B cell (primary cell): ENCODE measurements at regions of chr17 and their contacts with region 1.

Region 1: GRCh38 chr17:4565209-4566141 is 5.1 kb upstream of the GGT6 start:
- DNase-seq: peak; percentile 71
- ATAC-seq: peak; percentile 74
- H3K4me3 ChIP-seq: no peak overlapping the region
- H3K4me3 Mint-ChIP-seq: peak overlapping the region; percentile 73
- H3K27ac ChIP-seq: no peak overlapping the region
- H3K27ac Mint-ChIP-seq: no peak overlapping the region
- H3K4me1 ChIP-seq: peaks cover 14 to 19% of the 10 kb centered on the region in 2 donors
- H3K4me1 Mint-ChIP-seq: peaks cover 25% of the 10 kb centered on the region
- H3K27me3 ChIP-seq: no peaks in the 10 kb centered on the region
- H3K27me3 Mint-ChIP-seq: no peaks in the 10 kb centered on the region
- CTCF ChIP-seq: peak; percentile 92

Region 2: DNA sequence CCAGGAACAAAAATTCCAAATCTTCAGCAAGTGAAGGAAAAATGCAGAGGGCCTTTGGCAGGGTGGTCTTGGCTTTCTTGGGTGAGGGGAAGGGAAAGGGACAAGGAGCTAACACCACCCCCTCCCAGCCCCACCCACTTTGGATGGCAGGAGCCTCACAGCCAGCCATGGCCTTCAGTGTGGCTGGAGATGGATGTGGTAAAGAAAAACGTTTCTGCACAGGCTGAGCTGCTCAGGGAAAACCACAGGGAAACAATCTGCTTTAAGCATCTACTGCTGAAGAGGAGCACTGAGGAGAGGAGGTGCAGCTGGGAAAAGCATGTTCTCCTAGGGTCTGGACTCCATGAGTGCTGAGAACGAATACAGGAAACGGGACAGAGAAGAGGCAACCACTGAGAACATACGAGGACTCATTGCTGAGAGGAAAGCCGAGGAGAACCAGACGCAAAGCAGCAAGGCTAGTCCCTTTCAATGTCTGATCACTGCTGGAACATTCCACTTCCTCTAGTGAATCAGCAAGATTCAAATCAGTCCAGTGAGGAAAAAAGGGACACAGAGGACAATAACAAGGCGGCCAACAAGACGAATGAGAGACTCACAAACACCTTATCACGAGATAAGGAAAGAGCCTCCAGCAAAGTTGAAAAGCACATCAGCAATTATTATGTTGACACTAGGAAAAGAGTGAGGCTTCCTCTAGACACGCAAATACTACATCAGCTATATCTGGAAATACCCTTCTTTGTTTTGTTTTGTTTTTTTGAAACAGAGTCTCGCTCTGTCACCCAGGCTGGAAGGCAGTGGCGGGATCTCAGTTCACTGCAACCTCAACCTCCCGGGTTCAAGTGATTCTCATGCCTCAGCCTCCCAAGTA is 464.4 kb before region 1 on chr17:
- CTCF ChIA-PET with region 1: no interaction called
- POLR2A ChIA-PET with region 1: no interaction called
- intact Hi-C with region 1: no loop called
- DNase-seq: peak; percentile 35
- ATAC-seq: peak; percentile 54
- H3K4me3 ChIP-seq: no peak overlapping the region
- H3K4me3 Mint-ChIP-seq: peak overlapping the region; percentile 33
- H3K27ac ChIP-seq: peak overlapping the region; percentile 3 to 79
- H3K27ac Mint-ChIP-seq: peak overlapping the region; percentile 84
- H3K4me1 ChIP-seq: peaks cover 3 to 7% of the 10 kb centered on the region in 2 donors
- H3K4me1 Mint-ChIP-seq: peaks cover 19% of the 10 kb centered on the region
- H3K27me3 ChIP-seq: no peaks in the 10 kb centered on the region
- H3K27me3 Mint-ChIP-seq: no peaks in the 10 kb centered on the region
- CTCF ChIP-seq: no peak

Region 3: GRCh38 chr17:4516735-4517134 is 48.7 kb before region 1 on chr17:
- CTCF ChIA-PET with region 1: no interaction called
- POLR2A ChIA-PET with region 1: no interaction called
- intact Hi-C with region 1: no loop called
- DNase-seq: no peak
- ATAC-seq: no peak
- H3K4me3 ChIP-seq: no peak overlapping the region
- H3K4me3 Mint-ChIP-seq: no peak overlapping the region
- H3K27ac ChIP-seq: no peak overlapping the region
- H3K27ac Mint-ChIP-seq: no peak overlapping the region
- H3K4me1 ChIP-seq: peaks cover 0 to 12% of the 10 kb centered on the region in 2 donors
- H3K4me1 Mint-ChIP-seq: peaks cover 3% of the 10 kb centered on the region
- H3K27me3 ChIP-seq: no peaks in the 10 kb centered on the region
- H3K27me3 Mint-ChIP-seq: no peaks in the 10 kb centered on the region
- CTCF ChIP-seq: no peak

Region 4: DNA sequence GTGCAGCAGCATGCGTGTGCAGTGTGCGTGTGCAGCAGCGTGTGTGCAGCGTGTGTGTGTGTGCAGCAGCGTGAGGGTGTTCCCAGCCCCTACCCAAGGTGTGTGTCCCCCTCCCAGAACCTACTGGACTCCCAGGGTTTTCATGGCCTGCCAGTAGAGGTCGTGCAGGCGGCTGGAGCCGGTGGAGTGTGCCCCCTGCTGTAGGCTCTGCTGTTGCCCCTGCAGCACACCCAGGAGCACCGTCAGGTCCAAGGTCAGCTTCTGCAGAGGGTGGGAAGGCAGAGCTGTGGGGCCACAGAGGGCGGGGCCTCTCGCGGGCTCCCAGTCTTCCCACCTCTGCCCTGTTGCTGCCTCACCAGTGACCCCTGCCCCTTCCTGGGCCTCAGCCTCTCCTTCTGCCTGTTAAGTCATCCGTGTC is 25.2 kb before region 1 on chr17:
- CTCF ChIA-PET with region 1: no interaction called
- POLR2A ChIA-PET with region 1: no interaction called
- intact Hi-C with region 1: no loop called
- DNase-seq: no peak
- ATAC-seq: no peak
- H3K4me3 ChIP-seq: no peak overlapping the region
- H3K4me3 Mint-ChIP-seq: no peak overlapping the region
- H3K27ac ChIP-seq: no peak overlapping the region
- H3K27ac Mint-ChIP-seq: no peak overlapping the region
- H3K4me1 ChIP-seq: peaks cover 0 to 3% of the 10 kb centered on the region in 2 donors
- H3K4me1 Mint-ChIP-seq: peaks cover 2% of the 10 kb centered on the region
- H3K27me3 ChIP-seq: no peaks in the 10 kb centered on the region
- H3K27me3 Mint-ChIP-seq: no peaks in the 10 kb centered on the region
- CTCF ChIP-seq: no peak

Region 5: DNA sequence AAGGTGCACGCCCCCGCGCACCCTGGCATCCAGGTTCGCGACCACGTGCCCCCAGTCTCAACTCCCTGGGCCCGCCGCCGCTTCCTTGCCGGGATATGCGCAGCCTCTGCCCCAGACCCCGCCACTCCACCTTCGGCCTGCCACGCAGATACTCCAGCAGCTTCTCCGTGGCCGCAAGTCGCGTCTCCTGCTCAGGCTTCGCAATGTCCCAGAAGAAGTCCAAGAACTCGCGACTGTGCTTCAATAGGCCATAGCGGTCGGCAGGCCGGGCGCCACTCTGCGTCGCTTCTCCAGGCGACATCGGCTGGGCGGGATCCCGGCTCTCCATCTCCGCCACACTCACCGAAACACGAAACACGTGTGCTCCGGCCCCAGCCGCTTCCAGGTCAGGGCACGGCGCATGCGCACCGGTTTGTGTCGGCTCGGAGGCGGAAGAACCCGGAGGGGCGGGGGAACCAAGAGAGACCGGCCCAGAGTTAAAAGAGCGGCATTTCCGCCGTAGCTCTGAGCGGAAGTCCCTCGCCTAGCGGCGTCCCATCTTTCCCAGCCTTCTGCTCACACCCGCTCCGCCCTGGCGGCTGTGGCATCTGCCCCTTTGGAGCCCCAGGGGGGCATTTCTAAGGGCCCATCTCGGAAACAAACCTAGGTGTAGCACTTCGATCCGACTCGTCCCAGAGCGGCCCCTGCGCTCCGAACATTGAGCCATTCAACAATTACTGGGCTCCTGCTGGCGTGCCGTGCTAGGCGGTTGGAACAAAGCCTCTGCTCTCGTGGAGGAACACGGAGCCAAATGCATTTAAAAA is 10.3 kb before region 1 on chr17 and contains the start of gene MYBBP1A:
- CTCF ChIA-PET with region 1: interaction called, 48 read pairs
- POLR2A ChIA-PET with region 1: interaction called, 5 read pairs
- intact Hi-C with region 1: loop called (anchors 1 kb)
- DNase-seq: peak; percentile 96
- ATAC-seq: peak; percentile 95
- H3K4me3 ChIP-seq: peak within 1 kb of the TSS; percentile 74 to 90 (median 83)
- H3K4me3 Mint-ChIP-seq: peak within 1 kb of the TSS; percentile 94
- H3K27ac ChIP-seq: peak within 1 kb of the TSS; percentile 66 to 83
- H3K27ac Mint-ChIP-seq: peak within 1 kb of the TSS; percentile 96
- H3K4me1 ChIP-seq: peaks cover 19 to 21% of the 10 kb centered on the region in 2 donors
- H3K4me1 Mint-ChIP-seq: peaks cover 23% of the 10 kb centered on the region
- H3K27me3 ChIP-seq: no peaks in the 10 kb centered on the region
- H3K27me3 Mint-ChIP-seq: no peaks in the 10 kb centered on the region
- CTCF ChIP-seq: no peak
- total RNA-seq, gene MYBBP1A: 65.8 and 72.4 TPM in 2 replicates

Region 6: GRCh38 chr17:4576729-4577322 is 11.4 kb after region 1 on chr17:
- CTCF ChIA-PET with region 1: interaction called, 10 read pairs
- POLR2A ChIA-PET with region 1: no interaction called
- intact Hi-C with region 1: no loop called
- DNase-seq: no peak
- ATAC-seq: no peak
- H3K4me3 ChIP-seq: no peak overlapping the region
- H3K4me3 Mint-ChIP-seq: no peak overlapping the region
- H3K27ac ChIP-seq: no peak overlapping the region
- H3K27ac Mint-ChIP-seq: no peak overlapping the region
- H3K4me1 ChIP-seq: no peaks in the 10 kb centered on the region
- H3K4me1 Mint-ChIP-seq: peaks cover 6% of the 10 kb centered on the region
- H3K27me3 ChIP-seq: peaks cover 0 to 11% (median 1%) of the 10 kb centered on the region in 4 experiments
- H3K27me3 Mint-ChIP-seq: peaks cover 13% of the 10 kb centered on the region
- CTCF ChIP-seq: no peak

Region 7: DNA sequence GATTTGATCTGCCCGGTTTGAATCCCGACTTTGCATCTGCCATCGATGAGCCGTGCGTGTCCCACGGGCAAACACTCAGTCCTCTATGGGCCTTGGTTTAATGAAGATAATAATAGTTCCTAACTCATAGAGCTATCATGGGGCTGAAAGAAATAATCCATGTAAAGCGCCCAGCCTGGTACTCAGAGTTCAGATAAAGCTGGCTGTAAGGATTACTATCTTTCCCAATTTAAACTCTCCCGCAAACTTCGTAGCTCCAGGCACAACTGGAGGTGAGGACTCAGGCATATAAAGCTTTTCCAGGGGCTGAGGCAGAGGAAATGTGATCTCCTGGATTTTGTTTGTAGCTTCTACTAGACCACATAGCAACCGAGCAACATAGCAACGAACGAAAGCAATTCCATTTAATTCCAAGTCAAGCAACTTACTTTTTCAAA is 59.7 kb after region 1 on chr17:
- CTCF ChIA-PET with region 1: interaction called, 65 read pairs
- POLR2A ChIA-PET with region 1: no interaction called
- intact Hi-C with region 1: loop called (anchors 1 kb)
- DNase-seq: no peak
- ATAC-seq: no peak
- H3K4me3 ChIP-seq: no peak overlapping the region
- H3K4me3 Mint-ChIP-seq: no peak overlapping the region
- H3K27ac ChIP-seq: no peak overlapping the region
- H3K27ac Mint-ChIP-seq: no peak overlapping the region
- H3K4me1 ChIP-seq: no peaks in the 10 kb centered on the region
- H3K4me1 Mint-ChIP-seq: no peaks in the 10 kb centered on the region
- H3K27me3 ChIP-seq: peaks cover 0 to 4% (median 1%) of the 10 kb centered on the region in 4 experiments
- H3K27me3 Mint-ChIP-seq: peaks cover 4% of the 10 kb centered on the region
- CTCF ChIP-seq: no peak

Region 8: DNA sequence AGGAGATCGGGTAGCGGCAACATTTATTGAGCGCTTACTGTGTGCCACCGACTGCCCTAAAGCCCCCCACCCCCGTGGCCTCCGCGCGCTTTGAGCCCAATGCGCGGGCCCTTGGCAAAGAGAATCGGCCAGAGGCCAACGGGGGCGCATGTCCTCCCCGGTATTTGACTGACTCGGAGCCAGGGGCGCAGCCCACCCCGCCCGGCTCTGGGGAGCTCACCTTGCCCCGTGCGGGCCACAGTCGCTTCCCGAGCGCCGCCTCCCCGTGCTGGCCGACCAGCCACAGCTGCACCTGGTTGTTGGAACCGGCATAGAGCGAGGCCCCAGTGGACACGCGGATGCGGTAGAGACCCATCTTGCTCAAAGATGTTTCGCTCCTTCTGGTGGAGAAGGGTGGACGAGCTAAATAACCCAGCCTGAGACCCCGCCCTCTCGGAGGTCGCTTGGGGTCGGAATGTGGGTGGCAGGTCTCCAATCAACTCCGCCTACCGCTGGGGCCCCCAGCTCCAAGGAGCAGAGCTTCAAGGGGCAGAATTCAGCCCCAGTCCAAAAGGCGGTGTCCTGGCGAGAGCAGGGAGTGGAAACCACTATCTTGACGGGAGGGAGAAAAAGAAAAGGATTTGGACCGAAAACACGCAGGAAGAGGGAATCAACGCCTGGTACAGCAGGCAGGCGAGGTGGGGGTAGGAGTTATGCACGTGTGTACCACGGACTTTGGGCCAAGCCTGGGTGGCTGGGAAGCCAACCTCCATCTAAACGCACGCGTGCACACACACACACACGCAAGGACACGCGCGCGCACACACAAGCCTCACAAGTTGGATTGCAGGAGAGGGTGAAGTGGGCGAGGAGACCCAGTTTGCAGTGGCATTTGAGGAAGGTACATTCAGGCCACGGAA is 76.1 kb after region 1 on chr17 and contains the start of gene ALOX15:
- CTCF ChIA-PET with region 1: no interaction called
- POLR2A ChIA-PET with region 1: no interaction called
- intact Hi-C with region 1: no loop called
- DNase-seq: peak; percentile 38
- ATAC-seq: no peak
- H3K4me3 ChIP-seq: no peak within 1 kb of the TSS
- H3K4me3 Mint-ChIP-seq: no peak within 1 kb of the TSS
- H3K27ac ChIP-seq: no peak within 1 kb of the TSS
- H3K27ac Mint-ChIP-seq: peak within 1 kb of the TSS; percentile 11
- H3K4me1 ChIP-seq: peaks cover 28 to 32% of the 10 kb centered on the region in 2 donors
- H3K4me1 Mint-ChIP-seq: peaks cover 27% of the 10 kb centered on the region
- H3K27me3 ChIP-seq: peaks cover 0 to 54% (median 19%) of the 10 kb centered on the region in 4 experiments
- H3K27me3 Mint-ChIP-seq: peaks cover 50% of the 10 kb centered on the region
- CTCF ChIP-seq: no peak
- total RNA-seq, gene ALOX15: not detected in 2 replicates

Region 9: GRCh38 chr17:4789901-4790704 is 224.6 kb after region 1 on chr17:
- CTCF ChIA-PET with region 1: no interaction called
- POLR2A ChIA-PET with region 1: no interaction called
- intact Hi-C with region 1: loop called (anchors 10 kb)
- DNase-seq: peak; percentile 89
- ATAC-seq: peak; percentile 94
- H3K4me3 ChIP-seq: peak overlapping the region; percentile 27 to 70 (median 63)
- H3K4me3 Mint-ChIP-seq: peak overlapping the region; percentile 94
- H3K27ac ChIP-seq: peak overlapping the region in 1 of 2 donors; percentile 53
- H3K27ac Mint-ChIP-seq: peak overlapping the region; percentile 93
- H3K4me1 ChIP-seq: peaks cover 28 to 33% of the 10 kb centered on the region in 2 donors
- H3K4me1 Mint-ChIP-seq: peaks cover 30% of the 10 kb centered on the region
- H3K27me3 ChIP-seq: peaks cover 0 to 44% (median 27%) of the 10 kb centered on the region in 4 experiments
- H3K27me3 Mint-ChIP-seq: peaks cover 27% of the 10 kb centered on the region
- CTCF ChIP-seq: peak; percentile 81

Region 10: GRCh38 chr17:4895657-4896331 is 330.3 kb after region 1 on chr17:
- CTCF ChIA-PET with region 1: interaction called, 33 read pairs
- POLR2A ChIA-PET with region 1: no interaction called
- intact Hi-C with region 1: loop called (anchors 5 kb)
- DNase-seq: no peak
- ATAC-seq: no peak
- H3K4me3 ChIP-seq: no peak overlapping the region
- H3K4me3 Mint-ChIP-seq: no peak overlapping the region
- H3K27ac ChIP-seq: no peak overlapping the region
- H3K27ac Mint-ChIP-seq: no peak overlapping the region
- H3K4me1 ChIP-seq: peaks cover 21 to 22% of the 10 kb centered on the region in 2 donors
- H3K4me1 Mint-ChIP-seq: peaks cover 22% of the 10 kb centered on the region
- H3K27me3 ChIP-seq: peaks cover 0 to 21% (median 10%) of the 10 kb centered on the region in 4 experiments
- H3K27me3 Mint-ChIP-seq: no peaks in the 10 kb centered on the region
- CTCF ChIP-seq: no peak

Region 11: DNA sequence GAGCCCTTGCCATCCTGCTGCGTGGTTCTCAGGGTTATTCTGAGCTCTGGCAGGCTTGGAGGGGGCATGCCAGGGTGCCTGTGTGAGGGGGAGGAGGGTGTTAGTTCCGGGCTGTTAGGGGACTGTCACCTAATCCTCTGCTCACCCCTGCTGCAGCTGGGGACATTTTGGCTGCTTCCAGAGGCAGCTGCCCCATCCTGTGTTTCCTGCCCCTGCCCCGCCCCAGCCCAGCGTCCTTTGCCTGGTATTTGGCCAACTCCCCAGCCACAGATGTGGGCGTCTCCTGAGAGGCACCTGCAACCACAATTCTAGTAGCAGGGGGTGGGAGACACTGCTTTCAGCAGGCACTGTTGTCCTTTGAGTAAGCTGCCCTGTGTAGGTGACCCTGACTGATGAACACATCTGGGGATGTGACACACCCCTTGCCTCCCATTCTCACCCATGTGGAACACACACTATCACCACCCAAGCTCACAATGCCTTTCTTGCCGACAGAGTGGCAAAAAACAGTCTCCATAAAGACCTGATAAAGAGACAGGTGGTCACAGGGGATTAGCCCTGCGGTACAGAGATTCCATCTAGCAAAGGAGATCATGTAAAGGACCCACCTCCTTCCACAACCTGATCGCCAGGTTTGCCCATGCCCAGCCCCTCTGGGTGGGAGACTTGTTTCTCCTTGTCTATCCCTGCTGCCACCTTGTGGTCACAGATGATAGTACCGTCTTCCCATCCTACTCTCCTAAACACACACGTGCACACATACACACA is 337.8 kb after region 1 on chr17 and contains the start of gene CHRNE:
- CTCF ChIA-PET with region 1: interaction called, 7 read pairs
- POLR2A ChIA-PET with region 1: no interaction called
- intact Hi-C with region 1: loop called (anchors 5 kb)
- DNase-seq: peak; percentile 87
- ATAC-seq: peak; percentile 38
- H3K4me3 ChIP-seq: peak within 1 kb of the TSS in 1 of 5 experiments; percentile 38
- H3K4me3 Mint-ChIP-seq: peak within 1 kb of the TSS; percentile 72
- H3K27ac ChIP-seq: peak within 1 kb of the TSS in 1 of 2 donors; percentile 22
- H3K27ac Mint-ChIP-seq: peak within 1 kb of the TSS; percentile 82
- H3K4me1 ChIP-seq: peaks cover 45 to 53% of the 10 kb centered on the region in 2 donors
- H3K4me1 Mint-ChIP-seq: peaks cover 45% of the 10 kb centered on the region
- H3K27me3 ChIP-seq: peaks cover 0 to 29% (median 10%) of the 10 kb centered on the region in 4 experiments
- H3K27me3 Mint-ChIP-seq: peaks cover 7% of the 10 kb centered on the region
- CTCF ChIP-seq: peak; percentile 83
- total RNA-seq, gene CHRNE: 0.99 and 1.0 TPM in 2 replicates